K562 (cell line): ENCODE measurements at regions of chr1 and their contacts with region 1.

Region 1: GRCh38 chr1:65044378-65044777 is 78.0 kb upstream of the JAK1 start:
- DNase-seq: no peak
- ATAC-seq: no peak
- H3K4me3 ChIP-seq: no peak overlapping the region
- H3K27ac ChIP-seq: no peak overlapping the region
- H3K4me1 ChIP-seq: peaks cover 0 to 5% of the 10 kb centered on the region in 2 experiments; a peak in 2 of 5 replicates
- H3K27me3 ChIP-seq: no peaks in the 10 kb centered on the region
- CTCF ChIP-seq: no peak
- EP300 ChIP-seq: no peak
- POLR2A ChIP-seq: no peak
- RAD21 ChIP-seq: no peak

Region 2: DNA sequence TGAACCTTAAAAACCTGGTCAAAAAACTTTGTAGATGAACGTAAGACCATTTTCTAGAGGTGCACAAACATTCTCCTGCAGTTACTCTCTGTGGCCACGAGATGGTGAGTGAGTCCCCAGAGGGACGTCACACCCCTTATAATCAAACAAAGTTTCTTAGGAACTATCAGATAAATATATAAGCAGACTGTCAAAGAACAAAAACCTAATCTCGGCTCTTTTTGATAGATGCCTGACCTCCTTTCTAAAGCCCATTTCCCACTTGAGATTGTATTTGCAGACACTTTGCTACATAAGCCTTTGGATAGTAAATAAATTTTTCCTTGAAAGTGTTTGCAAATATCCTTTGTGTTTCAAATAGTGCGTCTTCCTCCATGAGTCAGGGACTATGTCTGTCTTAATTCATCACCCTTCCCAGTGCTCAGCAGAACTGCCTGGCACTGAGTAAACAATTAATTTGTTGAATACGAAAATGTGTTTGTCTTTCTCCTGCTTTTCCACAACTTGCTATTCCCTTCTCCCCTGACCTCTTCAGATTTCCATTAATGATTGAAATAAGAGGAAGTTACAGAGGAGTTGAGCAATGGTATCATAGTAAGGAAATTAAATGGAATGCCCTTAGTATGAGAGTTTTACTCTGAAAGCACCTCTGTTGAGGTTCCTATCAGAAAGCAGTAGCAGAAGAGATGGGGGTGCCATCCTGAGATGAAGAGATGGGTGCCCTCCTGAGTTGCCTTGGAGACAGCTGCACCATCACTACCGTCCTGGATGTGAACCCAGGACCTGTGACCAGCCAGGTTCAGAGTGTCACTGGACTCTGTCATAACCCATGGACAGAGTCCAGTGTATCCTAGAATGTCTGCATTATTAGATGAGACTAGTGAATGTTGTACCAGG is 357.3 kb before region 1 on chr1:
- CTCF ChIA-PET with region 1: no interaction called
- POLR2A ChIA-PET with region 1: no interaction called
- in situ Hi-C with region 1: no loop called
- intact Hi-C with region 1: loop called (anchors 5 kb)
- DNase-seq: peak; percentile 55 to 66 (median 61)
- ATAC-seq: peak; percentile 89
- H3K4me3 ChIP-seq: no peak overlapping the region
- H3K27ac ChIP-seq: no peak overlapping the region
- H3K4me1 ChIP-seq: no peaks in the 10 kb centered on the region
- H3K27me3 ChIP-seq: peaks cover 11 to 22% of the 10 kb centered on the region in 2 experiments
- CTCF ChIP-seq: peak; percentile 66 to 85 (median 80)
- EP300 ChIP-seq: no peak
- POLR2A ChIP-seq: no peak
- RAD21 ChIP-seq: peak; percentile 60 to 77